ENCODE measurements at regions of chr15 and their contacts with region 1.

Region 1: DNA sequence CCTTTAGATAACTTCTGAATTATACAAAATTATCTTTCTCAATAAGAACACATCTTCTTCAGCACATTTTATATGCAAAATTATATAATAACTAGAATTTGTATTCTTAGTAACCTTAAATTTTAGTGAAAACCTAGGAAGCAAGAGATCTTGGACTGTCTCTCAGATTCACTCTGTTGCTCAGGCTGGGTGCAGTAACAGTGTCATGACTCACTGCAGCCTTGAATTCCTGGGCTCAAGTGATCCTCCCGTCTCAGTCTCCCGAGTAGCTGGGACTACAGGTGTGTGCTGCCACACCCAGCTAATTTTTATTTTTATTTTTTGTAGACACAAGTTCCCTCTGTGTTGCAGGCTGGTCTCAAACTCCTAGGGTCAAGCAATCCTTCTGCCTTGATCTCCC is 29.9 kb downstream of the MKRN3 start:
- DNase-seq: no peak
- ATAC-seq: no peak
- H3K4me3 ChIP-seq: no peak overlapping the region
- H3K4me3 Mint-ChIP-seq: no peak overlapping the region
- H3K27ac ChIP-seq: no peak overlapping the region
- H3K27ac Mint-ChIP-seq: no peak overlapping the region
- H3K4me1 ChIP-seq: no peaks in the 10 kb centered on the region
- H3K4me1 Mint-ChIP-seq: no peaks in the 10 kb centered on the region
- H3K27me3 ChIP-seq: no peaks in the 10 kb centered on the region
- H3K27me3 Mint-ChIP-seq: no peaks in the 10 kb centered on the region
- CTCF ChIP-seq: no peak

Region 2: DNA sequence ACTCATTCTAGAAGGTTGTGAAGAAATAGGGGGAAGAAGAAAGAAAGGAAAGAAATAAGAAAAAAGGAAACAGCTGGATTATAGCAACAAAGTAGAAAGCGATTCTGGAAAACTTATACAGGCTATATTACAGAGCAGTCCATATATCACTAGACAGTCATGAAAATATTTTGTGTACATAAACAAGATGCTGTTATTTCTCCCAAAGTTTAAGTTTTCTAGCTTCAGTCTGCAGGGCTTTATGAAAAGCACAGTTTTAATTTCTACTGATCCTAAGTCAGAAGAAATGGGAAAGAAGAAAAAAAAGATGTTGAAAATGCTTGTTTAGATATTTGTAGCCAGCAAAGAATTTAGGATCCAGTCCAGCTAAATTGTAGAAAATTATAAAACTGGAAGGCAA is 413.1 kb after region 1 on chr15:
- CTCF ChIA-PET with region 1: no interaction called
- POLR2A ChIA-PET with region 1: no interaction called
- intact Hi-C with region 1: loop called in 1 of 2 experiments (anchors 10 kb)
- DNase-seq: no peak
- ATAC-seq: no peak
- H3K4me3 ChIP-seq: no peak overlapping the region
- H3K4me3 Mint-ChIP-seq: no peak overlapping the region
- H3K27ac ChIP-seq: no peak overlapping the region
- H3K27ac Mint-ChIP-seq: no peak overlapping the region
- H3K4me1 ChIP-seq: no peaks in the 10 kb centered on the region
- H3K4me1 Mint-ChIP-seq: no peaks in the 10 kb centered on the region
- H3K27me3 ChIP-seq: no peaks in the 10 kb centered on the region
- H3K27me3 Mint-ChIP-seq: no peaks in the 10 kb centered on the region
- CTCF ChIP-seq: no peak